CD4-positive, alpha-beta T cell (primary cell): ENCODE measurements at regions of chr1 and their contacts with region 1.

Region 1: DNA sequence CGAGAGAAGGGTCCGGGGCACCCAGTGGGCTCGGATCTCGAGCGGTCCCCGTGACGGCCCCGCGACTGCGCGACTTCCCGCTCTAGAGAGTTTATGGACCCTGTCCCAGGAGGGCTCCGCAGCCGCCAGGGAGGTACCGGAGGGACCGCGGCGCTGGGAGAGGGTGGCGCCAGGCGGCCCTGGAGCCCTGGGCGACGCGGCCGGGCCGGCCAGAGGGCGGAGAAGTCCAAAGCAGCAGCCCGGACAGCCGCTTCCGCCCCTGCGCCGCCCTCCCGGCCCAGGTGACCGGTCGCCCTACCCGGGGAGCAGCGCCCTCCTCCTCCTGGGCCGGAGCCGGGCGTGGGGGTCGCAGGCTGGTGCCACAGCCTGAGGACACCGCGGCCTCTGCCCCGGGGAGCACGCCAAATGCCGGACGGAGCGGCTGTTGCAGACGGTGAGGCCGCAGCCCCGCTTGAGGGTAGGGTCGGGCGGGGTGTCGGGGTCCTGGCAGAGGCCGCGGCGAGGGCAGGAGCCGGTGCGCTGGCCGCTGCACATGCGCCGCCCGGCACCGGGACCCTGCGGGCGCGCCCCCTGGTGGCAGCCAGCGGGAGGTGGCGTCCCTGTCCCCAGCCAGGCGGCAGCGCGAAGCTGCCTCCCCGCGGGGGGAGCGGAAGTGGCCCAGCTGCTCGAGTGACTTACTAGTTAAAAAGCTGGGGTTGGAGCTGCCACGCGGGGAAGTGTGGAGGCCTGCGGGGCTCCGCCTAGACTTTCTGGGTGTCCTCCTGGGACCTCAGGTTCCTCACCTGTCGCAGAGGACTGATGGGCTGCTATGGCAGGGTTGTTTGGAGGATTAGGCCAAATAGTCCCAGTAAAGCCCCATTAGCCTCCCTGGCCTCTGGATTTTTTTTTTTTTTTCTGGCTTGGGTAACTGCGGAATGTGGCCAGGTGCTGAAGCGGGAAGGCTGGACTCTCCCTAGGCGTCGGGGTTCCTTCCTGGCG is 20.9 kb upstream of the ZNF678 start:
- DNase-seq: peak; percentile 82 to 93 (median 88)
- ATAC-seq: peak; percentile 98
- H3K4me3 ChIP-seq: peak overlapping the region; percentile 41
- H3K4me3 Mint-ChIP-seq: peak overlapping the region; percentile 86
- H3K27ac ChIP-seq: peak overlapping the region in 1 of 2 donors; percentile 40
- H3K27ac Mint-ChIP-seq: peak overlapping the region; percentile 63
- H3K4me1 ChIP-seq: peaks cover 19% of the 10 kb centered on the region
- H3K4me1 Mint-ChIP-seq: peaks cover 6% of the 10 kb centered on the region
- H3K27me3 ChIP-seq: no peaks in the 10 kb centered on the region
- H3K27me3 Mint-ChIP-seq: no peaks in the 10 kb centered on the region
- CTCF ChIP-seq: peak; percentile 99

Region 2: DNA sequence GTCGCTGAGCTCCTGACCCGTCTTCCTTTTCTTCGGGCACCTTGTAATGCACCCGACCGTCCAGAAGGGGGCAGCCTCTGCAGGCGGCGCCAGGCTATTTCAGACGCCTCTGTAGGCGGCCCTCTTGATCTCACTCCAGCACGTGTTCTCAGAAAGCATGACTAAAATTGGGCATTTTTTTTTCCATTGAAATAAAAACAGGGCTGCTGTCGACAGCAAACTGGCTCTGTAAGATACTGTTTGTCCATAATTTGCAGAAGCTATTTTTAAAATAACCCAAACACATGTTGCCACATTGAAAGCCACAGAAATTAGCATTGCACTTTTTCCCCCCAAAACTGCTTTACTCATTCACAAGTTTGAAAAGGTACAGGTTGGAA is 915.9 kb before region 1 on chr1:
- CTCF ChIA-PET with region 1: no interaction called
- POLR2A ChIA-PET with region 1: no interaction called
- intact Hi-C with region 1: loop called in 1 of 2 experiments (anchors 5 kb)
- DNase-seq: peak; percentile 65 to 88 (median 73)
- ATAC-seq: peak; percentile 97
- H3K4me3 ChIP-seq: peak overlapping the region; percentile 43
- H3K4me3 Mint-ChIP-seq: no peak overlapping the region
- H3K27ac ChIP-seq: no peak overlapping the region
- H3K27ac Mint-ChIP-seq: peak overlapping the region; percentile 46
- H3K4me1 ChIP-seq: peaks cover 18% of the 10 kb centered on the region
- H3K4me1 Mint-ChIP-seq: peaks cover 22% of the 10 kb centered on the region
- H3K27me3 ChIP-seq: no peaks in the 10 kb centered on the region
- H3K27me3 Mint-ChIP-seq: no peaks in the 10 kb centered on the region
- CTCF ChIP-seq: peak; percentile 99

Region 3: DNA sequence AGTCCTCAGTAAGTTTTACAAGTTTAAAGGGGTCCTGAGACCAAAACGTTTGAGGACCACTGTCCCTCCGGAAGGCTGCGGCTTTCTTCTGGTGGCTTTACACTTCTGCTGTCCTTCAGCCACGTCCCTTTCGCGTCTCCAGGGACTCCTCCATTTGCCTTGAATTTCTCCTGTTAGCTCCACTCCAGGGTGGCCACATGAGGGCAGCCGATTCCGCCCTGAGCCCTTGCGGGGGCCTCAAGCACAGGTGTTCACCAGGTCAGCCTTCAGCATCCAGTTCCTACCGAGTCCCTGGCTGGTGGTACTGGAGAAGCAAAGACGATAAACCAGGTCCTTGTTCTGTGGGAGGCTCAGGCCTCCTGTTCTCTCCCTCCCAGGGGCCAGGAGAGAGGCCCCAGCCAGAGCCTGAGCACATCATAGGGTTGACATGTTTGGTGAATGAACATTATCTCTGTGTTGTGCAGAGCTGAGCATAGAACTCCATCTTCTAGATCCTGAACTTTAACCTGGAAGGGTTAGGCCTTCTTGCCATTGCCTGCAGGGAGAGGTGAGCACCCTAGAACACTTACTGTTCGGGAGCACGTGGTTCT is 629.8 kb before region 1 on chr1:
- CTCF ChIA-PET with region 1: no interaction called
- POLR2A ChIA-PET with region 1: no interaction called
- intact Hi-C with region 1: loop called in 1 of 2 experiments (anchors 10 kb)
- DNase-seq: peak; percentile 7 to 66 (median 32)
- ATAC-seq: peak; percentile 58
- H3K4me3 ChIP-seq: no peak overlapping the region
- H3K4me3 Mint-ChIP-seq: no peak overlapping the region
- H3K27ac ChIP-seq: no peak overlapping the region
- H3K27ac Mint-ChIP-seq: no peak overlapping the region
- H3K4me1 ChIP-seq: peaks cover 2% of the 10 kb centered on the region
- H3K4me1 Mint-ChIP-seq: no peaks in the 10 kb centered on the region
- H3K27me3 ChIP-seq: no peaks in the 10 kb centered on the region
- H3K27me3 Mint-ChIP-seq: no peaks in the 10 kb centered on the region
- CTCF ChIP-seq: peak; percentile 54

Region 4: GRCh38 chr1:227486559-227486958 is 55.9 kb before region 1 on chr1:
- CTCF ChIA-PET with region 1: no interaction called
- POLR2A ChIA-PET with region 1: no interaction called
- intact Hi-C with region 1: loop called in 1 of 2 experiments (anchors 2 kb)
- DNase-seq: peak in 1 of 14 experiments; percentile 7
- ATAC-seq: no peak
- H3K4me3 ChIP-seq: no peak overlapping the region
- H3K4me3 Mint-ChIP-seq: no peak overlapping the region
- H3K27ac ChIP-seq: no peak overlapping the region
- H3K27ac Mint-ChIP-seq: no peak overlapping the region
- H3K4me1 ChIP-seq: no peaks in the 10 kb centered on the region
- H3K4me1 Mint-ChIP-seq: no peaks in the 10 kb centered on the region
- H3K27me3 ChIP-seq: no peaks in the 10 kb centered on the region
- H3K27me3 Mint-ChIP-seq: peaks cover 3% of the 10 kb centered on the region
- CTCF ChIP-seq: no peak

Region 5: DNA sequence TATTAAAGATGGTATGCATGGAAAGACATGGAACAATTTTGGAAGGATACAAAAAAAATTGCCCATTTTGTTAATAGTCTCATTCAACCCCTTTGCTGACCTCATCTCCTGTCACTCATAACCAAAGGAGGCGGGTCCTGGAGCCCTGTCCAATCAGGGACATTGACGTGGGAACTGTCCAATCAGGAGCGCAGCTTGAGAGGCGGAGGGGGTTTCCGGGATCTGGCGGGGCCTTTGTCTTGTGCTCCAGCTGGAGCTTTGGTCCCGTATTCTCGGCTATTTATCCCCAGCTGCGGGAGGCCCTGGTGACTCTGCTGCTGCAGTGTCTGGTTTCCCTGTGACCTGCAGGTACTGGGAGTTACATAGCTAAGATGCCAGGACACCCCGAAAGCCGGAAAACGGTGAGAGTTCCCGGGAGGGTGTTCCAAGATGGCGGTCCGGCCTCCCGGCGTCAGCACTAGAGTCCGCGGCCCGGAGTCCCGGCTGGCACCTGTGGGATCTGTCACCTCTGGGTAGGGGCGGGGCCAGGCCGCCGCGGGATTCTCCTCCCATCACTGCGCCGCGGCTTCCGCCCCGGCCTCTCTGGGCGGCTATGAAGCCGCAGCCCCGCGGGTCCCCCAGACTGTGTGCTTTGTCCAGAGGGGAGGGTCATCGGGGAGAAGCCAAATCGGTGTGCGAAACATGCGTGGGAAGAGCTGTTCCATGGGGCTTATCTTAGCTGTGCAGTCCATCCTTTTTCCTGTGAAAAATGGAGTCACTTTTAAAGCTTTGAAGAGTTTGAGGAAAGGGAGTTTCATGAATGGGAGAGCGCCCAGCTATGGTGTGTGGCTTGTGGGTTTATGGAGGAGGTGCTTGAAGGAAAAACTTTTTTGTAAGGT is 21.1 kb after region 1 on chr1 and contains the start of gene ZNF678:
- CTCF ChIA-PET with region 1: interaction called, 11 read pairs
- POLR2A ChIA-PET with region 1: interaction called, 9 read pairs
- intact Hi-C with region 1: loop called in 1 of 2 experiments (anchors 2 kb)
- DNase-seq: peak; percentile 70 to 94 (median 80)
- ATAC-seq: peak; percentile 94
- H3K4me3 ChIP-seq: peak within 1 kb of the TSS; percentile 88
- H3K4me3 Mint-ChIP-seq: peak within 1 kb of the TSS; percentile 94
- H3K27ac ChIP-seq: peak within 1 kb of the TSS; percentile 52 to 78
- H3K27ac Mint-ChIP-seq: peak within 1 kb of the TSS; percentile 87
- H3K4me1 ChIP-seq: peaks cover 37% of the 10 kb centered on the region
- H3K4me1 Mint-ChIP-seq: peaks cover 45% of the 10 kb centered on the region
- H3K27me3 ChIP-seq: peaks cover 15 to 34% of the 10 kb centered on the region in 2 experiments
- H3K27me3 Mint-ChIP-seq: peaks cover 35% of the 10 kb centered on the region
- CTCF ChIP-seq: no peak
- total RNA-seq, gene ZNF678: 2.8 to 2.9 TPM

Region 6: DNA sequence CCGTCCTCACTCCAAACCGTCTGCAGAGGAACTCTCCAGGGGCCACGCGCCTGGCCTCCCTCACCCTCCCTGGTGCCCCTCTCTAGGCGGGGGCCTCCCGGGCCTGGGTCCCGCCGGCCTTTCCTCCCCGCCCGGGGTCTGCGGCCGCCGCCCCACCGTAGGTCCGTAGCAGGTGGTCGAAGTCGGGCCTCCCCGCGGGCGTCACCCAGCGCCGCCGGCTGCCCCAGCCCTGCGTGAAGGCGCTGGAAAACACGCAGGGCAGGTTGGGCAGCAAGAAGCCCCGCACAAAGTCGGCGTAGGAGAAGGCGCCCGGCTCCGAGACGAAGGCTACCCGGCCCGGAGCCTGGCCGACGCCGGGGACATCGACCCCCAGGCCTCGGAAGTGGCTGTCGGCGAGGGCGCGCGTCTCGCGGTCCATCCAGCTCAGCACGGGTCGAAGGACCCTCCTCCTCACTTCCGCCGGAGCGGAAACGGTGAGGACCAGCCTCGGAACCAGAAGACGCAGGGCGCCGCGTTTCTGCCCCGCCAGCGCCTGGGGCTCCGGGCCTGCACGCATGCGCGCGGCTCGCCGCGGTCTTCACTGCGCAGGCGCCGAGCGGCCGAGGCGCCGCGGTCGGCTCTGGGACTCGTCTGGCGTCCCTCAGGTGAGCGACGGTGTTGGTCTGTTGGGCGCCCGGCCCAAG is 192.6 kb after region 1 on chr1 and contains the starts of genes JMJD4 and SNAP47:
- CTCF ChIA-PET with region 1: no interaction called
- POLR2A ChIA-PET with region 1: interaction called, 4 read pairs
- intact Hi-C with region 1: loop called in 1 of 2 experiments (anchors 5 kb)
- DNase-seq: peak; percentile 86 to 96 (median 92)
- ATAC-seq: peak; percentile 90
- H3K4me3 ChIP-seq: peak within 1 kb of the TSS; percentile 71
- H3K4me3 Mint-ChIP-seq: peak within 1 kb of the TSS; percentile 92
- H3K27ac ChIP-seq: peak within 1 kb of the TSS in 1 of 2 donors; percentile 69
- H3K27ac Mint-ChIP-seq: peak within 1 kb of the TSS; percentile 83
- H3K4me1 ChIP-seq: peaks cover 37% of the 10 kb centered on the region
- H3K4me1 Mint-ChIP-seq: peaks cover 56% of the 10 kb centered on the region
- H3K27me3 ChIP-seq: no peaks in the 10 kb centered on the region
- H3K27me3 Mint-ChIP-seq: no peaks in the 10 kb centered on the region
- CTCF ChIP-seq: no peak
- total RNA-seq, gene JMJD4: 11.4 to 11.9 TPM
- total RNA-seq, gene SNAP47: 12.8 to 14.0 TPM

Region 7: DNA sequence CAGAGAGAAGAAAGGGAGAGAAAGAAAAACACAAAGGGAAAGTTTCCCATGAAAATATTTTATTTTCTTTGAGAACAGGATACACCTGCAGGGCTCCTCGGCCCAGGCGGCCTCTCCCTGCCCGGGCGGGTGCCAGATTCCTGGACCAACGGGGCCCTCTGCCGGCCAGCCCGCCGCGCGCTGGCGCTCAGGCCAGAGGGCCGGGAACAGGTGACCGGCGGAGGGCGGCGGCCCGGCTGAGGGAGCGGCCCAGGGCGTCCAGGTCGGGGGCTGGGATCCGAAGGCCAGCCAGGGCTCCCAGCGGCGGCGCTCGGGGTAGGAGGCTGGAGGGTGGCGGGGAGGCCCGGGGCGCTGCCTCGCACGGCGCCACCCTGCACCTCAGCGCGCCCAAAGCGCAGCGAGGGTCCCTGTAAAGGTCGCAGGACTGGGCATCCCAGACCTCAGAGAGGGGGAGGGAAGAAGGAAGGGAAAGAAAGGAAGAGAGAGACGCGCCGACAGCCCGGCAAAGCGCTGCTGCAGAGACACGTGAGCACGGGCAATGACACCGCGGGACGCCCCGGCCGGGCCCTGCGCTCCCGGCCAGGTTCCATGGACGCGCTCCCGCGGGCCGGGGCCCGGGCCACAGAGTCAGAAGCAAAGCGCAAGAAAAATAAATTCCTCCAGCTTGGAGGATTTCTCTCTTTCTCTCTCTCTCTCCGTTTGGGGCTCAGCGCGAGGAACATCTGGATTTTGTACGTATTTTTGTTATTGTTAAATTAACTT is 404.4 kb after region 1 on chr1:
- CTCF ChIA-PET with region 1: no interaction called
- POLR2A ChIA-PET with region 1: no interaction called
- intact Hi-C with region 1: loop called in 1 of 2 experiments (anchors 5 kb)
- DNase-seq: peak in 13 of 14 experiments; percentile 35 to 75 (median 52)
- ATAC-seq: peak; percentile 71
- H3K4me3 ChIP-seq: peak overlapping the region; percentile 33
- H3K4me3 Mint-ChIP-seq: peak overlapping the region; percentile 72
- H3K27ac ChIP-seq: no peak overlapping the region
- H3K27ac Mint-ChIP-seq: no peak overlapping the region
- H3K4me1 ChIP-seq: peaks cover 22% of the 10 kb centered on the region
- H3K4me1 Mint-ChIP-seq: no peaks in the 10 kb centered on the region
- H3K27me3 ChIP-seq: peaks cover 13 to 19% of the 10 kb centered on the region in 2 experiments
- H3K27me3 Mint-ChIP-seq: peaks cover 19% of the 10 kb centered on the region
- CTCF ChIP-seq: peak; percentile 87